AG04450 (cell line): ENCODE measurements at regions of chr3 and their contacts with region 1.

Region 1: DNA sequence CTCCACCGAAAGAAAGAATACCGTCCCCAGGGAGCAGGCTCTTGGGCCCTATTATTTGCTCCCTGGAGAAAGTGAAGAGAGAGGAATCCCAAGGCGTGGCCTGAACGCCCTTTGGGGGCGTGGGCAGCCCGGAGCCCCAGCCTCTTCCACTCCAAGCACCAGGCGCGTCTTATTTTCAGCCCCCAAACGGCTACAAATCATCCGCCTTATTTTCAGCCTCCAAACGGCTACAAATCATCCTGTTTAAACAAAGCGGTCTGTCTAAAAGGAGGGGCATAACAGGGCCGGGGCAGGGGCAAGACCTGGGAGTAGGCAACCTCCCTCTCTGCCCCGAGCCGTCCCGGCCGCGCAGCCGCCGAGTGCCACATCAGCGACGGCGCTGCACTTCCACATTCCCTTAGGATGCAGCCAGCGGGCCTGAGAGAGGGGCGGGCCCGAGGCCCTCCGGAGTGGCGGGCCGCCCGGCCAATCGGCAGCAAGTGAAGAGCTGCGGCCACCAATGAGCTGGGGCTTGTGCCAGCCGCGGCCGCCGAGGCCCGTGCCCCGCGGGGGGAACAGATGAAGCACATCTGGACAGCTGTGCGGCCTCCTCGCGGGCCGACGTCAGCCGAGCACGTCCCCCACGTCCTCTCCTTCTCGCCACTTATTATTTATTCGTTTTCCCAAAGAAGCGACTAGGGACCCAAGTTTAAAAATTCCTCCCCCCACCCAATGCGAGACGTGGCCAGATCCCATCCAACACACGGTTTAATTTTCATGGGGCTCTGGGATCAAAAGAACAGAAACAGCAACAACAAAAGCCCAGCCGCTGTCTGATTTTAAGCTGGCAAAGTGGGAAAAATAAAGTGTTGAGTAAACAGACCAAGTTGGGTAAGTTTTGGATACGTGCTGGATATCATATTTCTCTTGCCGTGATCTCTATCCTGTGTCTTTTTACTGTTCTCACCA is at the start of gene TMEM45A:
- DNase-seq: peak; percentile 85
- H3K4me3 ChIP-seq: peak within 1 kb of the TSS; percentile 66
- H3K27ac ChIP-seq: peak within 1 kb of the TSS; percentile 99
- H3K27me3 ChIP-seq: peaks cover 3% of the 10 kb centered on the region
- CTCF ChIP-seq: 0 out of 2 replicates have a peak, but pooled peaks have one; percentile 3
- polyA plus RNA-seq, gene TMEM45A: 33.0 and 42.8 TPM in 2 replicates

Region 2: DNA sequence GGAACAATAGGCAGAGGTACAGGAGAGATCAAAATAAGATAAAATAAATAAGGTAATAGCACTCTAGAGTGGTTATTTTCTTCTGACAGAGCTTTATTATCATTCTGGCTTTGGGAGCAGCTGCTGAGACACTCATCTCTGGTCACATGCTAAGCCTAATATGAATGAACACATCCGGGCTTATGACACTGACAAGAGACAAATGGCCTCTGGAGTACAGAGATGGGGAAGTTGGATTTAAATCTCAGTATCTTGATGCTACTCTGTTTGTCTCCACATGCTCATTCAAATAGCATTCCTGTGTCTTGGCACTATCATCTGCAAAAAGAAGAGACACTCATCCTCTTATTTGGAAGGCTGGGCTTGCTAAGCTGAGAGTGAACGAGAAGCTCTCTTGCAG is 55.7 kb after region 1 on chr3:
- CTCF ChIA-PET with region 1: no interaction called
- POLR2A ChIA-PET with region 1: interaction called, 10 read pairs
- DNase-seq: no peak
- H3K4me3 ChIP-seq: no peak overlapping the region
- H3K27ac ChIP-seq: no peak overlapping the region
- H3K27me3 ChIP-seq: no peaks in the 10 kb centered on the region
- CTCF ChIP-seq: no peak

Region 3: DNA sequence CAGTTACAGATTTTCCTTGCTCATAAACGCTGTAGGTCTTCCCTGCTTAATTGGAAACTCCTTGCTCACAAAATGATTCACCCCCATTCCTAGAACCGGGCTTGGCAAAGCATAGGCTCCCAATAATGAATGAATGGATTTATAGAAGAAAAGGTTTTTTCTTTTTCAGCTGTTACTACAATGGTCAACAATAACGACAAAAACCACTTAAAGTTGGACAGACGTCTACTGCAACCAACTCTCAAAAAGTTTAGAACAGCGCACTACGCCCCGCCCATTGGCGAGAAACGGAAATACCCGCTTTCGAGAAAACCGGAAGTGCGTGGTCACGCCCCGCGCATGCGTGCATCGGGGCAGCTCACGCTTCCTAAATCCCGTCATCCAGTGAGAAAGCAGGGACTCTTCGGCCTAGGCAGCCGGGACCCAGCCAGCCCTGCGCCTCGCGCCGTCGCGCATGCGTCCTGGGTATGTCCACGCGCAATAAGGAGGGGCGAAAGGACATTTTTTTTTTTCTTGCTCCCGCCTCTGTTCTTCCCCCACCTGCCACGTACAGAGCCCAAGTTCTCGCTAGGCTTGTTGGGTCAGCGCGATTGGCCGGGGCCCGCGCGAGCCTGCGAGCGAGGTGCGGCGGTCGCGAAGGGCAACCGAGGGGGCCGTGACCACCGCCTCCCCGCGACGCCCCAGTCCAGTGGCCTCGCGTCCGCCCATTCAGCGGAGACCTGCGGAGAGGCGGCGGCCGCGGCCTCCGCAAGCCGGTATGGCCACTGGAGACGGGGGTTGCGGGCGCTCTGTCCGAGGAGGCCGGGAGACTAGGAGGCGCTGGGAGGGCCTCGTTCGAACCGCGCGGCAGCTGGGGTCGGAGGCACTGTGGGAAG is 216.9 kb after region 1 on chr3 and contains the start of gene TFG:
- CTCF ChIA-PET with region 1: interaction called, 10 read pairs
- POLR2A ChIA-PET with region 1: interaction called, 4 read pairs
- DNase-seq: peak; percentile 99
- H3K4me3 ChIP-seq: peak within 1 kb of the TSS; percentile 87
- H3K27ac ChIP-seq: peak within 1 kb of the TSS; percentile 92
- H3K27me3 ChIP-seq: no peaks in the 10 kb centered on the region
- CTCF ChIP-seq: no peak
- polyA plus RNA-seq, gene TFG: 96.4 and 99.8 TPM in 2 replicates

Region 4: DNA sequence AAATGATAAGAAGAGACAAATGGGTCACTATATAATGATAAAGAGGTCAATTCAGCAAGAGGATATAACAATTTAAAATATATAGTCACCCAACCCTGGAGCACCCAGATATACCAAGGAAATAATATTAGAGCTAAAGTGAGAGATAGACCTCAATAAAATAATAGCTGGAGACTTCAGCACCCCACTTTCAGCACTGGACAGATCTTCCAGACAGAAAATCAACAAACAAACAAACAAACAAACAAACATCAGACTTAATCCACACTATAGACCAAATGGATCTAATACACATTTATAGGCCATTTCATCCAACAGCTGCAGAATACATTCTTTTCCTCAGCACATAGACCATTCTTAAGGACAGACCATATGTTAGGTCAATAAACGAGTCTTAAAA is 941.3 kb after region 1 on chr3:
- CTCF ChIA-PET with region 1: no interaction called
- POLR2A ChIA-PET with region 1: interaction called, 14 read pairs
- DNase-seq: no peak
- H3K4me3 ChIP-seq: no peak overlapping the region
- H3K27ac ChIP-seq: no peak overlapping the region
- H3K27me3 ChIP-seq: no peaks in the 10 kb centered on the region
- CTCF ChIP-seq: no peak